Tibial artery (tissue), 4 donors: ENCODE measurements at regions of chr5 and their contacts with region 1.

Region 1: DNA sequence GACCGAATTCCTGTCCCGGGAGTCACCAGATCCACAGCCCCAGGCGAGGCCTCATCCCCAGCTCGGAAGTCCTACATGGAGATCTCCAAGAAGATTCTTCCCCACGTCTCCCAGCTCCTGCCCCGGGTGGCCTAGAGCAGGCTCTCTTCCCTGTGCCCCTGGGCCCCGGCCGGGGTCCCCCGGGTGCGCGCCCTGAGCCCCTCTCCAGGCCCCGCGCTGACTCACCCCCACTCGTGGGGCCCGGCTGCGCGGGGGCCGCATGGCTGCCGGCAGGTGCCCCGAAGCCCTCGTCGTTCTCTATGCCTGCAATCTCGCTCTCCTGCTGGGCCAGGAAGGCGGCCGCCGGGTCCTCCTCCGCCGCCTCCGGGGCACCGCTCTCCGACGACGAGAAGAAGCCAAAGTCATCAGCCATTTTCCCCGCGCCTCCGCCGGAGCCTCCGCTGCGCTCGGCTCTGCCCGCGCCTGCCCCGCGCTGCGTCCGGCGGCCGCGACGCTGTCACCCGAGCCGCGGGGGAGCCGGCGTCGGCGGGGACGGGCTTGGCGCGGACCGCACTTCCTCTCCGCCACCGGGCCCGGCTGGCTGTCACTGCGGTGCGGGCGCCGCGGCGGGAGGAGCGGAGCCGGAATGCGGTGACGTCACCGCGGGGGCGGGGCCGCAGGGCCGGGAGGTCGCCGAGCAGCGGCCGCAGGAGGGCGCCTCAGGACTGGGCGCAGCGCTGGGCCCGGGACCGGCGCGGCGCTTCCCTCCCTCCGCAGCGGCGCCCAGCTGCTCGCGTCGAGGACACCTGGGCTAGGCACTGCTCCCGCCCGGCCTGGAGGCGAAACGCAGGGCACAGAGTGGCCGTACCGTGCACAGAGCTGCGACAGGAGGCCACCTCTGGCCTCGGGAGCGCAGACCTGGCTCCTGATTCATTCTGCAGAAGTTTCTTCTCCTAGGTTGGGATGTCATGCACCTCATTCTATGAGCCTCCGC is at the start of gene CLTB:
- DNase-seq: peak; percentile 84 to 94
- H3K4me3 ChIP-seq: peak within 1 kb of the TSS; percentile 85 to 88
- H3K27ac ChIP-seq: peak within 1 kb of the TSS; percentile 86 to 91
- H3K4me1 ChIP-seq: peaks cover 5 to 48% (median 43%) of the 10 kb centered on the region in 4 donors
- H3K27me3 ChIP-seq: no peaks in the 10 kb centered on the region
- CTCF ChIP-seq: peak; percentile 69 to 89

Region 2: GRCh38 chr5:176447982-176448608 is 31.9 kb after region 1 on chr5 and contains the start of gene FAF2:
- intact Hi-C with region 1: loop called (anchors 1 kb)
- DNase-seq: peak; percentile 96 to 98
- H3K4me3 ChIP-seq: peak within 1 kb of the TSS; percentile 69 to 89
- H3K27ac ChIP-seq: peak within 1 kb of the TSS; percentile 94 to 95
- H3K4me1 ChIP-seq: peaks cover 0 to 46% (median 19%) of the 10 kb centered on the region in 4 donors
- H3K27me3 ChIP-seq: no peaks in the 10 kb centered on the region
- CTCF ChIP-seq: peak; percentile 97 to 99

Region 3: DNA sequence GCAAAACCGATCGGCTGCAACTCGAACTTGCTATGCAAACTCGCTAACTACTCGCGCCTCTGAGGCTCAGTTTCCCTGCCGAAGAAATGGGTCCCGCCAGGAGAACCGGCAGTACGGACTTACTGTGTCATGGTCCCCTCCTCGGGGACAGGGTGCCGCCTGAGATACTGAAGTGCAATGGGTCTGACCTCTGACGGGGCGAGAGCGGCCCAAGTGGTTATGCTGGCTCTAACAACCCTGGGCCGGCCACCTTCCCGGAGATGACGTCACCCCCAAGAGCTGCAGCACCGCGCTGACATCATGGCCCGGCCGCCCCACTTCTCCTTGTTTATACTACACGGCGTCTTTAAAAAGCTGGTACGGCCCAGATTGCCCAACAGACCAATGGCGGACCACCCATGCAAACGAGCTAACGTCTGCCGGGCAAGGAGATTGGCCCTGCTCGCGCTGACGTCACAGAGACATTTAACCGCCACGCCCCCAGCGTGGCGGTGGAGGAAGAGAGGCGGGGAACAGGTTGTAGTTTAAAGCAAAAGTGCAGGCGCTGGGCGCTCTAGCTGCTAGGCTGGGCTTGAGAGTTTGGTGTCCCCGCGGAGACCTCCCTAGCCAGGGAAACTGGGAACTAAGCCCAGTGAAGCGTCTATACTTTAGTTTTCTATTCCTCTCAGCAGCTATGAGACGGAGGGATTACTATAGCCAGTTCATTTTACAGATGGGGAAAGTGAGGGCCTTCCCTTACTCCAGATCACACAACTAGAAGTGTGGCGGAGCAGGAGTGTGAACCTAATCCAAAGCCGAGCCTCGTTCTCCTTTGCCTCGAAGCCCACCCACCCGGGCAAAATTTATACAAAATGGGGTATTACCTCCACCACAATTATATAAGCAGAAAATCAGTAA is 121.6 kb after region 1 on chr5:
- intact Hi-C with region 1: loop called (anchors 1 kb)
- DNase-seq: peak; percentile 100
- H3K4me3 ChIP-seq: peak overlapping the region; percentile 83 to 87
- H3K27ac ChIP-seq: peak overlapping the region; percentile 92
- H3K4me1 ChIP-seq: peaks cover 3 to 51% (median 40%) of the 10 kb centered on the region in 4 donors
- H3K27me3 ChIP-seq: no peaks in the 10 kb centered on the region
- CTCF ChIP-seq: no peak

Region 4: DNA sequence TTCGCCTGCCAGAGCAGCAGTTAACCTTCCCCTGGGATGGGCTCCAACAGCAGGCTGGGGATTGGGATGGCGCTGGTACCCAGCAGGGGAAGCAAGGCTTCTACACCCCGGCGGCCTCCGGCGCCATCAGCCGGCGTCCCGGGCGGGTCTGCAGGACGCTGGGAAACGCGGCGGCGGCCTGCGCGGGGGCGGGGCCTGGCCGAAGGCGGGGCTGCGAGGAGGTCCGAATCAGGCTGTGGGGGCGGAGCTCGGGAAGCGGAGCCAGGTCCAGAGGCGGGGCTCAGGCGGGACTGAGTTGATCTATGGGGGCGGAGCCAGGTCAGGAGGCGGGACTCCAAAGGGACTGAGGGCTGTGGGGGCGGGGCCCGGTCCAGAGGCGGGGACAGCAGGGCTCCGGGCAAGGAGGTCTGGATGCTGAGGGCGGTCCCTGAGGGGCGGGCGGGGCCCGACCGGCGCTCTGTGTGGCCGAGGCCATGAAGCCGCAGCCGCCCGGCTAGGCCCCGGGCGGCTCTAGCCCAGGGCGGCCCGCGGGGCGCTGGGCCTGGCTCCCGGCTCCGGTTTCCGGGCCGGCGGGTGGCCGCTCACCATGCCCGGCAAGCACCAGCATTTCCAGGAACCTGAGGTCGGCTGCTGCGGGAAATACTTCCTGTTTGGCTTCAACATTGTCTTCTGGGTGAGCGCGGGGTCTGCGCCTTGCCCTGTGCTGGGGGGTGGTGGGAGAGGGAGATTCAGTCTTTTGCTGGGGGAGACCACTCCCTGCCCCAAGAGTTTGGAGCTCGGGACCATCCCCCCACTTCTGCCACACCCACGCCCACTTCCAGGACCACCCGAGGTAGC is 231.0 kb after region 1 on chr5 and contains the start of gene TSPAN17:
- intact Hi-C with region 1: loop called (anchors 10 kb)
- DNase-seq: peak; percentile 100
- H3K4me3 ChIP-seq: peak within 1 kb of the TSS; percentile 66 to 74
- H3K27ac ChIP-seq: peak within 1 kb of the TSS; percentile 70 to 84
- H3K4me1 ChIP-seq: peaks cover 0 to 29% (median 17%) of the 10 kb centered on the region in 4 donors
- H3K27me3 ChIP-seq: no peaks in the 10 kb centered on the region
- CTCF ChIP-seq: peak in 1 of 2 experiments; percentile 23

Region 5: DNA sequence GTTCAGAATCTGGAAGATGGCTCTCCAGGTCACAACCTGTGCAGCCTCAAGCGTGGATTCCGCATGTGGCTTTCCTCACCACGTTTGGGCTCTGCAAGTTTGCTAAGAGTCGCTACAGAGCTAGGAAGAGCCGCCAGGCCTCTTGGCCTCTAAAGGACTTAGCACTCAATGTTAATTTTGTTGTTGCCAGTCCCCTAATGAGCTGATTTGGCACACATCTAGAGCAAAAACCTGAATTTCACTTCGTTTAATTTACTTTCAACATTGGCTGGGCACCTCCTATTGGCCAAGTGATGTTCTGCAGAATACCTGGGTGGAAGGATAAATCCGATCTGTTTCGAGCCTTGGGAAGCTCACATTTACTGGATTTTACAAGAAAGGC is 328.3 kb after region 1 on chr5:
- intact Hi-C with region 1: no loop called
- DNase-seq: no peak
- H3K4me3 ChIP-seq: no peak overlapping the region
- H3K27ac ChIP-seq: no peak overlapping the region
- H3K4me1 ChIP-seq: peaks cover 0 to 12% (median 5%) of the 10 kb centered on the region in 4 donors
- H3K27me3 ChIP-seq: peaks cover 0 to 99% of the 10 kb centered on the region in 2 donors
- CTCF ChIP-seq: no peak